Activated naive CD4-positive, alpha-beta T cell treated with anti-CD3 and anti-CD28 coated beads, Interleukin-2, amount 10 ng/mL, durations not matched to agents 7 days and 5 days (primary cell): ENCODE measurements at regions of chr5 and their contacts with region 1.

Region 1: DNA sequence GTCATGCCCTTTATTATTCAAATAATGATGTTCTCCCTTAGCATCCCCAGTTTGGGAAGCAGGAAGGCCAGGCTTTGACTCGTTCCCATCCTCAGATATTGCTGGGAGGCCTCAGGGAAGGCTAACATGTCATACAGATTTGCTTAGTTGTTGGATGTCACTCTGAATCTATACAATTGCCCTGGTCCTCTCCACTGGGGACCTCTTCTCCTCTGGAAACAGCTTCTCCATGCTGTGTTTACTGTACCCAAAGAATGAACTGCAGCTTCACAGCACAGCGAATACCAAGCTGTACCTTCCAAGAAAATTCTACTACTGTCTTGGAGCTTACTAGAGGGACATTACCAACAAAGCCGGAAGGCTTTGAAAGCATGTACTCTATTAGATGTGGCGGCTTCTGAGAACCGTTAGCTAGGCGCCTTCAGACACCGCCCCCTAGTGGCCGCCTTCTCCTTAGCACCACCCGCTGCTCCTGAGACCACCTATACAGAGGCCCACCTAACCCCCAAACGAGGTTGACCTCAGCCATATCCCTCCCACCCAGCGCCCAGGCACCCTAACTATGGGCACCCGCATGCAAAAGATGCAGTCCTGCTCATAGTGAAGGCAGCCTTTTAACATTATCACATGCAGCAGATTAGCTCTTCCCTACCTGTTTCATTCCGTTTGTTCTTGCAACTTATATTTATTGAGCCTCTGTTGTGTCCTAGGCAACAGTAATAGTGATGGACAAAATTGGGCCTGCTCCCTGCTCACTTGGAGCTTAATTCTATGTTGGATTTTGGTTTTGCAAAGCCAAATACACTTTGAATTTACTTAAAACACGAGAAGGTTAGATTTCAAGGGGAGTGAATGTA is 34.9 kb upstream of the FOXI1 start:
- DNase-seq: peak; percentile 32
- H3K4me3 Mint-ChIP-seq: no peak overlapping the region
- H3K27ac Mint-ChIP-seq: no peak overlapping the region
- H3K4me1 Mint-ChIP-seq: no peaks in the 10 kb centered on the region
- H3K27me3 Mint-ChIP-seq: no peaks in the 10 kb centered on the region

Region 2: GRCh38 chr5:170056561-170057267 is 14.1 kb before region 1 on chr5:
- CTCF ChIA-PET with region 1: interaction called, 13 read pairs
- DNase-seq: no peak
- H3K4me3 Mint-ChIP-seq: no peak overlapping the region
- H3K27ac Mint-ChIP-seq: no peak overlapping the region
- H3K4me1 Mint-ChIP-seq: no peaks in the 10 kb centered on the region
- H3K27me3 Mint-ChIP-seq: no peaks in the 10 kb centered on the region